Activated CD4-positive, alpha-beta memory T cell treated with anti-CD3 and anti-CD28 coated beads, Interleukin-2, amount 10 ng/mL, durations not matched to agents 7 days and 5 days (primary cell): ENCODE measurements at regions of chr17 and their contacts with region 1.

Region 1: GRCh38 chr17:50865984-50866774 is at the start of gene TOB1:
- DNase-seq: peak; percentile 97
- H3K4me3 Mint-ChIP-seq: peak within 1 kb of the TSS; percentile 97
- H3K27ac Mint-ChIP-seq: peak within 1 kb of the TSS; percentile 95
- H3K4me1 Mint-ChIP-seq: peaks cover 49% of the 10 kb centered on the region
- H3K27me3 Mint-ChIP-seq: no peaks in the 10 kb centered on the region
- total RNA-seq, gene TOB1: 121 to 124 TPM

Region 2: DNA sequence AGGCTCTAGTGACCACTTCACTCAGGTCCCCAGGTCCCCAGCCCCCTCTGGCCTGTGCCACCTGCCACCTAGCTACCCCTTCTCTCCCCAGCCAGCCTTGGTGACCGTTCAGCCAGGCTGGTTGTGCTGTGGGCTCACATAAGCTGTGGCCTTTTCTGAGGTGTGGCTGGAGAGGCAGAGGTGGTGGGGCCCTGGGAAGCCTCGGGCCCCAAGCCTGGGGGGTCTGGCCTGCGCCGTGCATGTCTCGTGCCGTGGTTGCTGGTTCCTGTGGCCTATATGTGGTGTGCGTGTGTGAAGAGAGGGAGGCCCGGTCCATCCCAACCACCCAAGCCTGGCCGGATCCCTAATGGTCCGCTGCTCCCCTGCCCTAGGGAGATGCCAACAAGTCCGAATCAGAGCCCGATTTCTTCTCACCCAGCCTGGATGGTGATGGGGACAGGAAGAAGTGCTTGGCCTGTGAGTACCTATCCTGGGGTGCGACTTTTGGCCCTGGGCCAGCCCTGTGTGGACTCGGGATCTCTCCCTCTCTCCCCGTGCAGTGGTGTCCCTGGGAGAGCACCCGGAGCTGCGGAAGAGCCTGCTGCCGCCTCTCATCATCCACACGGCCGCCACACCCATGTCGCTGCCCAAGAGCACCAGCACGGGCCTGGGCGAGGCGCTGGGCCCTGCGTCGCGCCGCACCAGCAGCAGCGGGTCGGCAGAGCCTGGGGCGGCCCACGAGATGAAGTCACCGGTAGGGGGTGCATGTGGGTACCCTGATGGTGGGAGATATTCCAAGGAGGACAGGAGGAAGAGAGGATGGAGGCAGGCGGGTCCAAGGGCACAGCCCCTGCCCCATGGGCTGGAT is 269.8 kb before region 1 on chr17:
- CTCF ChIA-PET with region 1: no interaction called
- POLR2A ChIA-PET with region 1: no interaction called
- DNase-seq: no peak
- H3K4me3 Mint-ChIP-seq: no peak overlapping the region
- H3K27ac Mint-ChIP-seq: no peak overlapping the region
- H3K4me1 Mint-ChIP-seq: no peaks in the 10 kb centered on the region
- H3K27me3 Mint-ChIP-seq: no peaks in the 10 kb centered on the region

Region 3: DNA sequence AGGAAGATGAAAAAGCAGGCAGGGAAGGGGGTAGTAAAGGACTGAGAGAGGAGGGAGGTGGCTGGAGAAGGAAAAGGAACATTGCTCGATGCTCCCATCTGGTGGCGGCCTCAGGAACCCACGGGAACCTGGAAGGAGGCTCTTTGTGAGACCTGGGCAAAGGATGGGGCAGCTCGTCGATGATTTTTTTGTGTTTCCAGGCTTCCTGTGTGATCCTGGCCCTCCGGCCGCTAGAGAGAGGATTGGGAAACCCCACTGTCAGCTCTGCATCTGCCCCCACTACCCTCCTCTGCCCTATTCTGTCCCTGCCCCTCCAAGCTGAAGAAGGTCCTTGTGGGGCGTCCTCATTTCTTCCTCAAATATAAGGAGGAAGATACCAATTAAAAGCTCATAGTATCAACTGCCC is 24.2 kb before region 1 on chr17:
- CTCF ChIA-PET with region 1: no interaction called
- POLR2A ChIA-PET with region 1: interaction called, 19 read pairs
- DNase-seq: peak; percentile 65
- H3K4me3 Mint-ChIP-seq: no peak overlapping the region
- H3K27ac Mint-ChIP-seq: no peak overlapping the region
- H3K4me1 Mint-ChIP-seq: no peaks in the 10 kb centered on the region
- H3K27me3 Mint-ChIP-seq: no peaks in the 10 kb centered on the region

Region 4: GRCh38 chr17:50883850-50884438 is 17.8 kb after region 1 on chr17:
- CTCF ChIA-PET with region 1: interaction called, 8 read pairs
- POLR2A ChIA-PET with region 1: interaction called, 53 read pairs
- DNase-seq: no peak
- H3K4me3 Mint-ChIP-seq: no peak overlapping the region
- H3K27ac Mint-ChIP-seq: no peak overlapping the region
- H3K4me1 Mint-ChIP-seq: peaks cover 39% of the 10 kb centered on the region
- H3K27me3 Mint-ChIP-seq: peaks cover 2% of the 10 kb centered on the region

Region 5: GRCh38 chr17:50904521-50905459 is 38.6 kb after region 1 on chr17:
- CTCF ChIA-PET with region 1: interaction called, 30 read pairs
- POLR2A ChIA-PET with region 1: interaction called, 298 read pairs
- DNase-seq: no peak
- H3K4me3 Mint-ChIP-seq: no peak overlapping the region
- H3K27ac Mint-ChIP-seq: peak overlapping the region; percentile 85
- H3K4me1 Mint-ChIP-seq: peaks cover 70% of the 10 kb centered on the region
- H3K27me3 Mint-ChIP-seq: no peaks in the 10 kb centered on the region

Region 6: GRCh38 chr17:50931144-50931908 is 65.1 kb after region 1 on chr17:
- CTCF ChIA-PET with region 1: interaction called, 8 read pairs
- POLR2A ChIA-PET with region 1: interaction called, 71 read pairs
- DNase-seq: peak; percentile 53
- H3K4me3 Mint-ChIP-seq: peak overlapping the region; percentile 68
- H3K27ac Mint-ChIP-seq: peak overlapping the region; percentile 47
- H3K4me1 Mint-ChIP-seq: peaks cover 39% of the 10 kb centered on the region
- H3K27me3 Mint-ChIP-seq: peaks cover 23% of the 10 kb centered on the region

Region 7: DNA sequence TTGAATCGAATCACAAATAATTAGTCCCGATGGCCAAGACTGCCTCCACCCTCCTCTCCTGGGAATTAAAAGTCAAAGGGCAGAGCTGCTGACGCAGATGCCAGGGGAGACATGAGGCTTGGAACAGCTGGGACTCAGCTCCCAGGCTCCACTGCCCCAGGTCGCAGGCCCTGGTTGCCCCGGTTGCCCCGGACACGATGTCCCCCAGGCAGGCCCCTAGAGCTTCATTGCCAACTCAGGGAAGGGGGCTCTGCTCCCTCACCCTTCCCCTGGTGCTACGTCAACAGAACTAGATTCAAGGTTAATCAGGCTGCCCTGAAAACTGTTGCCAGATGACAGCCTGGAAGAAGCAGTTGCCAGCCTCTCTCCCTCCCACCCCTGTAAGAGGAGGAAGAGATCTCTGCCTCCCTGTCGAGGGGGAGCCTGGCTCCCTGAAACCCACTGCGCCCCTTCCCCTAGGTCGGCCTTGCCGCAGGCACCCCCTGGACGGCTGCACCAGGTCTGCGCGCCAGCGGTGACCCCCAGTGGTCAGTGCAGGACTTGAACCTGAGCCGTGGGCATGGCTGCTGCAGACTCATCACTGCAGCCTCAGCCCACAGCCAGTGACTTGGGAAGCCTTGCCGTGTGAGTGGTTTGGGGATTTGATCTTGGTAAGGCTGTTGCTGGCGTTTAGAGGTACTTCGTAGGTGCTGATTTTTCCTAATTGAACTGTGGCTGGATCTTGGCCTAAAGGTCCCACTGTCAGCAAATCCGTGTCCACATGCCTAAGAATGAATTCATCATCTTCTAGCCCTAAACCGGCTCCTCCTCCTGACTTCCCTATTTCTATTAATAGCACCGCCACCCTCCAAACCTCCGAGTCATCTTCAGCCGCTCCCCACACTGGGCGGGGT is 84.1 kb after region 1 on chr17:
- CTCF ChIA-PET with region 1: interaction called, 25 read pairs
- POLR2A ChIA-PET with region 1: interaction called, 457 read pairs
- DNase-seq: peak; percentile 64
- H3K4me3 Mint-ChIP-seq: no peak overlapping the region
- H3K27ac Mint-ChIP-seq: peak overlapping the region; percentile 35
- H3K4me1 Mint-ChIP-seq: peaks cover 44% of the 10 kb centered on the region
- H3K27me3 Mint-ChIP-seq: no peaks in the 10 kb centered on the region

Region 8: GRCh38 chr17:51120739-51121617 is 254.8 kb after region 1 on chr17 and contains the start of gene SPAG9:
- CTCF ChIA-PET with region 1: no interaction called
- POLR2A ChIA-PET with region 1: interaction called, 24 read pairs
- DNase-seq: peak; percentile 92
- H3K4me3 Mint-ChIP-seq: peak within 1 kb of the TSS; percentile 86
- H3K27ac Mint-ChIP-seq: peak within 1 kb of the TSS; percentile 96
- H3K4me1 Mint-ChIP-seq: peaks cover 49% of the 10 kb centered on the region
- H3K27me3 Mint-ChIP-seq: no peaks in the 10 kb centered on the region
- total RNA-seq, gene SPAG9: 50.9 to 53.0 TPM